CD4-positive, alpha-beta memory T cell (primary cell): ENCODE measurements at regions of chr2 and their contacts with region 1.

Region 1: GRCh38 chr2:24075915-24076848 is at the start of gene SF3B6:
- DNase-seq: peak; percentile 99 to 100 (median 99)
- H3K4me3 ChIP-seq: peak within 1 kb of the TSS; percentile 87 to 94
- H3K4me3 Mint-ChIP-seq: peak within 1 kb of the TSS; percentile 98 to 100 (median 99)
- H3K27ac ChIP-seq: peak within 1 kb of the TSS; percentile 89
- H3K27ac Mint-ChIP-seq: peak within 1 kb of the TSS; percentile 96 to 100 (median 99)
- H3K4me1 ChIP-seq: peaks cover 28% of the 10 kb centered on the region
- H3K4me1 Mint-ChIP-seq: peaks cover 24 to 48% (median 32%) of the 10 kb centered on the region in 4 donors
- H3K27me3 ChIP-seq: no peaks in the 10 kb centered on the region
- H3K27me3 Mint-ChIP-seq: no peaks in the 10 kb centered on the region
- total RNA-seq, gene SF3B6: 50.0 to 55.3 TPM

Region 2: GRCh38 chr2:23926750-23927571 is 149.2 kb before region 1 on chr2 and contains the start of gene ATAD2B:
- CTCF ChIA-PET with region 1: interaction called, 16 read pairs
- POLR2A ChIA-PET with region 1: interaction called, 124 read pairs
- intact Hi-C with region 1: loop called (anchors 1 kb)
- DNase-seq: peak; percentile 93 to 97 (median 96)
- H3K4me3 ChIP-seq: peak within 1 kb of the TSS; percentile 79 to 95
- H3K4me3 Mint-ChIP-seq: peak within 1 kb of the TSS; percentile 93 to 99 (median 98)
- H3K27ac ChIP-seq: peak within 1 kb of the TSS; percentile 97
- H3K27ac Mint-ChIP-seq: peak within 1 kb of the TSS; percentile 98 to 100 (median 100)
- H3K4me1 ChIP-seq: peaks cover 47% of the 10 kb centered on the region
- H3K4me1 Mint-ChIP-seq: peaks cover 35 to 63% (median 44%) of the 10 kb centered on the region in 4 donors
- H3K27me3 ChIP-seq: no peaks in the 10 kb centered on the region
- H3K27me3 Mint-ChIP-seq: no peaks in the 10 kb centered on the region
- total RNA-seq, gene ATAD2B: 38.7 to 44.4 TPM

Region 3: DNA sequence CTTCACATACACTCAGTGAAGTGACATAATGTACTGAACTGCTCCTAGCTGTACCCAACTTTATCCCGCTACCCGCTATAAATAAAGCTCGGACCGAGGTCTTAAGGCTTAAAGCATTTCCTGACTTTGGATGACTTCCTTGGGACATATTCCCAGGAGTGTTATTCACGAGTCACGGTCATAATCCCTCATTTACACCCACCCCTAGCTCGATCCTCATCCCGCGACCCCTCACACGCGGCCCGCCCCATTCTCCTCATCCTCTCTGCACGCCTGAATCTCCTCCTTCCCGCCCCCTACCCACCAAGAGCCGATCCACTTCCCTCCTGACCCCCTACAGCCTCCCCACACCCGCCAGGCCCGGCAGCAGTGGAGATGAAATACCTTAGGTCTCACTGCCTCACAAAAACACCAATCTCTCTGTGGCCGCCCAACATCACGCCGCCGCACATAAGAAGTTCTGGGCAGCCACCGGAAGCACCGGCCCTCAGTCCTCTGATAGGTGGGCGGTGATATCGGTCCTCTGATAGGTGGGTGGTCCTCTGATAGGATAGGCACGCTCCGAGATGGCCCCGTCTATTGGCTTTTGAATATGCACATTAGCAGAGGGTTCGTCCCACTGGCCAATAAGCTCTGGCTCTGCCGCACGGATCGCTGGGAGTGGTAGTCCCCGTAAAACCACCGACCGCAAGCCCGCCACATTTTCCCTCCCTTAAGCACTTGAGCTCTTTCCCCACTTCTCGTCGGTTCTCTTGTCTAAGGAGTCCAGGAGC is 29.1 kb before region 1 on chr2 and contains the start of gene WDCP:
- CTCF ChIA-PET with region 1: interaction called, 6 read pairs
- POLR2A ChIA-PET with region 1: interaction called, 50 read pairs
- intact Hi-C with region 1: loop called (anchors 1 kb)
- DNase-seq: peak; percentile 90 to 98 (median 92)
- H3K4me3 ChIP-seq: peak within 1 kb of the TSS; percentile 89 to 90
- H3K4me3 Mint-ChIP-seq: peak within 1 kb of the TSS; percentile 91 to 100 (median 96)
- H3K27ac ChIP-seq: peak within 1 kb of the TSS; percentile 65
- H3K27ac Mint-ChIP-seq: peak within 1 kb of the TSS; percentile 69 to 98 (median 93)
- H3K4me1 ChIP-seq: peaks cover 25% of the 10 kb centered on the region
- H3K4me1 Mint-ChIP-seq: peaks cover 16 to 28% (median 25%) of the 10 kb centered on the region in 4 donors
- H3K27me3 ChIP-seq: no peaks in the 10 kb centered on the region
- H3K27me3 Mint-ChIP-seq: peaks cover 0 to 1% of the 10 kb centered on the region in 2 donors
- total RNA-seq, gene WDCP: 17.5 to 20.5 TPM

Region 4: DNA sequence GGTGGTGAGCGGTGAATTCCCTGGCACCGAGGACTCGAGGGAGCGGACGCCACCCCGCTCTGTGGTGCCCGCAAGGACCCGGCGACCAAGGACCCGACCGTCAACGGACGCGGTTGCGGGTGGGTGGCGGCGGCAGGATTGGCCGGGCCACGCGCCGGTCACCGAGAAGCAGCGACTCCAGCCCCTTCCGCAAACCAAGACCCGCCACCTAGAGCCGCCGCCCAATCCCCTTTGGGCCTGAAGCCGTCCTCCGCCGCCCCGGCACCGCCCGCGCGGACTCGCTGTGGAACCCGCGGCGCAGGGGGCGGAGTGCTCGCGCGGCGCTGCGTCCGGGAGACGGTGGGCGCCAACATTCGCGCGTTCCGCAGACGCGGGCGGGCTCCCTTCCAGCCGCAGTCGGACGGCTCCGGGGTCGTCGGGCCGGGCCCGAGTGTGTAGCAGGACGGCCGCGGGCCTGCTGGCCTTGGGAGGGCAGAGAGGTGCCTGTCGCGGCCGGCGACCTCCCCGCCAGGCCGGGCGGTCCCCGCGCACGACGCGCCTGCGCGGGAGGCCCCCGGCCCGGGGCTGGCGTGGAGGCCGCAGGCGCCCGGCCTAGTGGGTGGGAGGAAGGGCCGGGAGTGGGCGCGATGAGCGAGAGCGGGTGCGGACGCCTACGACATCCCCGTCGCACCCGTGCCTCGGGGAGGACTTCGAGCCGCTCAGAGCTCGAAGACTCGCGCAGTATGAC is 47.2 kb after region 1 on chr2 and contains the starts of genes FAM228B and PFN4:
- CTCF ChIA-PET with region 1: no interaction called
- POLR2A ChIA-PET with region 1: interaction called, 11 read pairs
- intact Hi-C with region 1: no loop called
- DNase-seq: peak; percentile 38 to 52 (median 43)
- H3K4me3 ChIP-seq: peak within 1 kb of the TSS in 1 of 2 donors; percentile 48
- H3K4me3 Mint-ChIP-seq: peak within 1 kb of the TSS; percentile 81 to 90 (median 88)
- H3K27ac ChIP-seq: peak within 1 kb of the TSS; percentile 17
- H3K27ac Mint-ChIP-seq: peak within 1 kb of the TSS; percentile 57 to 86 (median 77)
- H3K4me1 ChIP-seq: peaks cover 8% of the 10 kb centered on the region
- H3K4me1 Mint-ChIP-seq: peaks cover 8 to 17% (median 13%) of the 10 kb centered on the region in 4 donors
- H3K27me3 ChIP-seq: no peaks in the 10 kb centered on the region
- H3K27me3 Mint-ChIP-seq: no peaks in the 10 kb centered on the region
- total RNA-seq, gene FAM228B: 17.2 to 24.4 TPM
- total RNA-seq, gene PFN4: not detected

Region 5: GRCh38 chr2:24792874-24793760 is 716.9 kb after region 1 on chr2 and contains the starts of genes CENPO and PTRHD1:
- CTCF ChIA-PET with region 1: no interaction called
- POLR2A ChIA-PET with region 1: no interaction called
- intact Hi-C with region 1: loop called (anchors 2 kb)
- DNase-seq: peak; percentile 96 to 98 (median 97)
- H3K4me3 ChIP-seq: peak within 1 kb of the TSS; percentile 85 to 97
- H3K4me3 Mint-ChIP-seq: peak within 1 kb of the TSS; percentile 94 to 99 (median 96)
- H3K27ac ChIP-seq: peak within 1 kb of the TSS; percentile 93
- H3K27ac Mint-ChIP-seq: peak within 1 kb of the TSS; percentile 98 to 100 (median 99)
- H3K4me1 ChIP-seq: peaks cover 17% of the 10 kb centered on the region
- H3K4me1 Mint-ChIP-seq: peaks cover 10 to 25% (median 17%) of the 10 kb centered on the region in 4 donors
- H3K27me3 ChIP-seq: no peaks in the 10 kb centered on the region
- H3K27me3 Mint-ChIP-seq: no peaks in the 10 kb centered on the region
- total RNA-seq, gene CENPO: 4.6 to 6.1 TPM
- total RNA-seq, gene PTRHD1: 12.0 to 12.8 TPM